BJ (cell line): ENCODE measurements at regions of chr3 and their contacts with region 1.

Region 1: GRCh38 chr3:43176666-43177065 is 70.8 kb upstream of the POMGNT2 start:
- DNase-seq: no peak
- H3K4me3 ChIP-seq: no peak overlapping the region
- H3K27me3 ChIP-seq: no peaks in the 10 kb centered on the region
- CTCF ChIP-seq: no peak

Region 2: GRCh38 chr3:41881233-41881821 is 1295.3 kb before region 1 on chr3:
- CTCF ChIA-PET with region 1: no interaction called
- POLR2A ChIA-PET with region 1: no interaction called
- DNase-seq: no peak
- H3K4me3 ChIP-seq: no peak overlapping the region
- H3K27me3 ChIP-seq: no peaks in the 10 kb centered on the region
- CTCF ChIP-seq: peak; percentile 50

Region 3: DNA sequence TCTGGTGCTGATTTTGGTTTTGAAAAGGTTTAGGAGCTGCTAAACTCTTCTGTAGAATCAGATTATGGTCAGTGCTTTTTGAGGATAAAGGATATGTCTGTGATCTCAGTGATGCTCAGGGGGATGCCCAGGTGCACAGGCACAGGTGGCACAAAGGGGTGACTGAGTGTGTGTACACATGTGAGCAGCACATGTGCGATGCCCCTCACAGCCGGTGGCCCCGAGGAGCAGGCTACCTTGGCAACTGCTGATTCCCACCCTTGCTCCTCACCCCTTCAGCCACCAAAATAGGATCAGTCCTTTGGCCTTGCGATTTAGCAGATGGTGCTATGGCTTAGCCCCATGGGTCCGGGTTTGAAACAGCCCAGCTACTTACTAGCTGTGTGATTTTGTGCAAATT is 121.9 kb before region 1 on chr3:
- CTCF ChIA-PET with region 1: no interaction called
- POLR2A ChIA-PET with region 1: no interaction called
- DNase-seq: no peak
- H3K4me3 ChIP-seq: no peak overlapping the region
- H3K27me3 ChIP-seq: no peaks in the 10 kb centered on the region
- CTCF ChIP-seq: no peak

Region 4: DNA sequence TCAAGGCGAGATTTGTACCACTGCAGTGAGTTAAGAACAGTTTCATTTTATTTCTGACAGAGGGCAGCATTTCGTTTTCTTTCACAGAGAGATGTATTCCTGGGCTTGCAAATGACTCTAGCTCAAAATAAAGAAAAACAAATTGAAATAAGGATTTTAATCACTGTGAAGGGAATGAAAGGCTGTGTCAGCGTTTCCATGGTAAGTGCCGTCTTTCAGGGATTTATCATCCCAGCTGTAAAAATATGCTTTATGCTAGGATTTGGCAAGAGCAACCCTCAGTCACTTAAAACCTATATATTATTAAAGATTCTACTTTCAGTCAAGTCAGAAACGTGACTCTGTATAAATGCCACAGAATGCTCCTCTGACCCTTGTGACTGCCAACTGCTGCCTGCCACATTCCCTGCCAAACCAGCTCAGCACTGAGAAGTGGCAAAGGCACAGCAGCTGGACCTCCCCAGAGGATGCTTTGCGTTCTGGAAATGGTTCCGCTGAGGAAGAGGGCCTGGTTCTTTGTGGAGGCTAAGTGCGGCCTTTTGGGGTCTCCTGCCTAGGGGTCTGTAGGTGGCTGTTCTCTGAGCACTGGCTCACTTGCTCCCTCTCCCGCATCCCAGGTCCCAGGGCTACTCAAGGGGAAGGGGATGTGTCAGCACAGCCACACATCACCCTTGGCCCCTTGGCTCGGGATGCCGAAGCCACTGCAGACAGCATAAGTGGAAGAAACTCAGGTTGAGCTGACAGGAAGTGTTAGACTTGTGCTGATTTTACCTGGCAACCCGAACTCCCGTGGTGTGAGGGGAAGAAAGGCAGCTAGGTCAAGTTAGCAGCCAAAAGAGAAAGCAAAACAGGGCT is 14.2 kb before region 1 on chr3:
- CTCF ChIA-PET with region 1: interaction called, 18 read pairs
- POLR2A ChIA-PET with region 1: no interaction called
- DNase-seq: peak; percentile 23
- H3K4me3 ChIP-seq: no peak overlapping the region
- H3K27me3 ChIP-seq: peaks cover 3% of the 10 kb centered on the region; the same call in 1 of the 2 replicates
- CTCF ChIP-seq: peak; percentile 52